ENCODE measurements at regions of chr3 and their contacts with region 1.

Region 1: DNA sequence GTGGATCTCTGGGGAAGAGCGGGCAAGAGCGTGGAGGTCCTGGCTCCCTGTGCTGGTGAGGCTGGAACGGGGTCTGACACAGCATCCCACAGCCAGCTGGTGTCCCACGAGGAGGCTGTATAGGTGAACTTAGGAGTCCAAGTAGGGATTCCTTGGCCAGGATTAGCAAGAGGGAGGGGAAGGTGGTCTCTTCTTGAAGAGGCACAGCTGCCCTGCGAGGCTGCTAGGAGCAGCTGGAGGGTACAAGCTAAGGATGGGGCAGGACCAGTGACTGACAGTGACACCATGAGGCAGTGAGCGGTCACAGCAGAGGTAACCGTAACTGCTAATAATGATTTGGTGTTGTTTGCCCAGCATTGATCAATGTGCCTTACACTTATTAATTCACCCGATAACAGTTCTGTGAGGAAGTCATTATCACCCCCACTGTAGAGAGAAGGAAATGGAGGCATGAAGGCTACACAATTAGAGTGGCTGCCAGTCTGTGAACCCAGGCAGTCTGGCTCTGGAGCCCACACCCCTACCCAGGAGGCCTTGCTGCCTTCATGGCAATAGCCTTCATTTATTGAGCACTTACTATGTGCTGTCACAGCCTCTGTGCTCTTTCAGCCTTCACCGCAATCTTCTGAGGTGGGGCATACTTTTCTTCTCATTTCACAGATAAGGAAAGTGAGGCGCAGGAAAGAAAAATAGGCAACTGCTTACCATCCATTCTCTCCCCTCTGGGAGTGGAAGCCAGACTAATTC is 59.4 kb downstream of the TMEM44 start:
- DNase-seq: peak in 1 of 2 experiments; percentile 29
- H3K4me3 ChIP-seq: no peak overlapping the region
- H3K27ac ChIP-seq: no peak overlapping the region
- H3K4me1 ChIP-seq: peaks cover 71% of the 10 kb centered on the region
- H3K27me3 ChIP-seq: no peaks in the 10 kb centered on the region
- CTCF ChIP-seq: peak; percentile 63

Region 2: GRCh38 chr3:194486540-194487288 is 87.2 kb before region 1 on chr3 and contains the start of gene ATP13A3:
- CTCF ChIA-PET with region 1: interaction called, 5 read pairs
- POLR2A ChIA-PET with region 1: interaction called, 19 read pairs
- intact Hi-C with region 1: loop called (anchors 1 kb)
- DNase-seq: peak; percentile 80 to 93
- H3K4me3 ChIP-seq: peak within 1 kb of the TSS; percentile 64
- H3K27ac ChIP-seq: peak within 1 kb of the TSS; percentile 96
- H3K4me1 ChIP-seq: peaks cover 71% of the 10 kb centered on the region
- H3K27me3 ChIP-seq: no peaks in the 10 kb centered on the region
- CTCF ChIP-seq: no peak
- total RNA-seq, gene ATP13A3: 203 and 242 TPM in 2 replicates

Region 3: GRCh38 chr3:194527726-194528125 is 46.1 kb before region 1 on chr3:
- CTCF ChIA-PET with region 1: no interaction called
- POLR2A ChIA-PET with region 1: interaction called, 19 read pairs
- intact Hi-C with region 1: loop called (anchors 2 kb)
- DNase-seq: no peak
- H3K4me3 ChIP-seq: no peak overlapping the region
- H3K27ac ChIP-seq: peak overlapping the region; percentile 95
- H3K4me1 ChIP-seq: peaks cover 27% of the 10 kb centered on the region
- H3K27me3 ChIP-seq: no peaks in the 10 kb centered on the region
- CTCF ChIP-seq: no peak

Region 4: GRCh38 chr3:194556086-194557056 is 17.5 kb before region 1 on chr3:
- CTCF ChIA-PET with region 1: no interaction called
- POLR2A ChIA-PET with region 1: interaction called, 10 read pairs
- intact Hi-C with region 1: loop called (anchors 1 kb)
- DNase-seq: peak in 1 of 2 experiments; percentile 46
- H3K4me3 ChIP-seq: no peak overlapping the region
- H3K27ac ChIP-seq: no peak overlapping the region
- H3K4me1 ChIP-seq: peaks cover 8% of the 10 kb centered on the region
- H3K27me3 ChIP-seq: no peaks in the 10 kb centered on the region
- CTCF ChIP-seq: no peak